SK-N-SH (cell line): ENCODE measurements at regions of chr13 and their contacts with region 1.

Region 1: DNA sequence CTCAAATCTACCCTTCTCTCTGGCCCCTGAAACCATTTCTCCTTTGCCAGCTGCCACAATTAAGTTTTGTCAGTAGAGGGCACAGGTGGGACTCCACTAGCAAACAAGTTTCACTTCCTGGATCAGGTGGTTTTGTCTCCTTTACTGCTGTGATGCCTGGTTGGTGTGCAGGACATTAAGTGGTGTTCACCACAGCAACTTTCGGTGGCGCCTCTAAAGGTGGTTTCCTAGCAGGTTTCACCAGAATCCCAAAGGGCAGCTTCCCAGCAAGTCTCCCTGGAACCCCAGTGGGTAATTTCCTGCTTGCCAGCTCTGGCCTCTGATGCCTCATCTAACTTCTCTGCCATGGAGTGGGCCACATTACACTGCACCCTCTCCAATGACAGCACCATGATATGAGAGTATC is 16.6 kb downstream of the MED4 start:
- DNase-seq: no peak
- H3K4me3 ChIP-seq: no peak overlapping the region
- H3K27ac ChIP-seq: no peak overlapping the region
- H3K4me1 ChIP-seq: no peaks in the 10 kb centered on the region
- H3K27me3 ChIP-seq: no peaks in the 10 kb centered on the region
- CTCF ChIP-seq: no peak; the same call in 1 of the 2 replicates
- EP300 ChIP-seq: no peak
- RAD21 ChIP-seq: no peak

Region 2: GRCh38 chr13:47875201-47875600 is 203.1 kb before region 1 on chr13:
- CTCF ChIA-PET with region 1: no interaction called
- POLR2A ChIA-PET with region 1: no interaction called
- DNase-seq: no peak
- H3K4me3 ChIP-seq: no peak overlapping the region
- H3K27ac ChIP-seq: no peak overlapping the region
- H3K4me1 ChIP-seq: no peaks in the 10 kb centered on the region
- H3K27me3 ChIP-seq: no peaks in the 10 kb centered on the region
- CTCF ChIP-seq: no peak
- EP300 ChIP-seq: no peak
- RAD21 ChIP-seq: no peak

Region 3: DNA sequence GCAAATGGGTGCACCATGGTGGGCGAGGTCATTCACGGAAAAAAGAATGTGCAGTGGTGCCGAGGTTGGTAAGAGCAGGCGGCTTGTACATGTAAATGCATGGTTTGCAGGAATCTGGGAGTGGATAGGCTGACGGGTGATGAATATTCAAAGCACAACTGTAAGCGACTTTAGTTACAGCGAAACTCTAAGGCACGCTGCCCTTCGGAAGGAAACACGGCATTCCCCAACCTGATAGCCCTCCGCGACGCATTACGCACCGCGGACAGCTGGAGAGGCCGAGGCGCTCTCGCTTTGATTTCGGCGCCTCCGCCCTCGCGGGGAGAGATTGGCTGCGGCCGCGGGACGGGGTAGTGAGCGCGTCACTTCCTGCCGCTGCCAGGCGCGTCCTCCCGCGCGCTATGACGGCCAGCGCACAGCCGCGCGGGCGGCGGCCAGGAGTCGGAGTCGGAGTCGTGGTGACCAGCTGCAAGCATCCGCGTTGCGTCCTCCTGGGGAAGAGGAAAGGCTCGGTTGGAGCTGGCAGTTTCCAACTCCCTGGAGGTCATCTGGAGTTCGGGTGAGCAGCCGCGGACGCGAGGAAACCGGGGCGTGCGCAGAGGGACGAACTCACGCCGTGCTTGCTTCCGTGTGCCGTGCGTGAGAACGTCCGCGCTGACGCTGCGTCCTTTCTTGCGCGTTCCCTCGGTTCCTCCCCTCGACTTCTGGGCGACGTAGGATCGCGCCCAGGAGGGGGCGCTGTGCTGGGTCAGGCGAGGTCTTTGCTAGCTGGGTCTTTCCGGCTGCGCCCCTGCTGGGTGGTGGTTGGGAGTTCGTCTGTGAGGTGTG is 40.7 kb before region 1 on chr13 and contains the start of gene NUDT15:
- CTCF ChIA-PET with region 1: interaction called, 11 read pairs
- POLR2A ChIA-PET with region 1: no interaction called
- DNase-seq: peak; percentile 93
- H3K4me3 ChIP-seq: peak within 1 kb of the TSS; percentile 71 to 86
- H3K27ac ChIP-seq: peak within 1 kb of the TSS; percentile 95 to 97
- H3K4me1 ChIP-seq: peaks cover 8 to 10% of the 10 kb centered on the region in 2 experiments; a peak in 3 of 4 replicates
- H3K27me3 ChIP-seq: no peaks in the 10 kb centered on the region
- CTCF ChIP-seq: peak; percentile 98
- EP300 ChIP-seq: peak; percentile 14 to 18; a peak in 1 of 4 replicates
- RAD21 ChIP-seq: peak; percentile 51
- polyA plus RNA-seq, gene NUDT15: 11.9 and 13.8 TPM in 2 replicates

Region 4: GRCh38 chr13:48094781-48095502 is 16.7 kb after region 1 on chr13 and contains the start of gene MED4:
- CTCF ChIA-PET with region 1: interaction called, 10 read pairs
- POLR2A ChIA-PET with region 1: no interaction called
- DNase-seq: peak; percentile 96
- H3K4me3 ChIP-seq: peak within 1 kb of the TSS; percentile 96 to 98
- H3K27ac ChIP-seq: peak within 1 kb of the TSS; percentile 59 to 70
- H3K4me1 ChIP-seq: peaks cover 5 to 13% of the 10 kb centered on the region in 2 experiments; a peak in 3 of 4 replicates
- H3K27me3 ChIP-seq: no peaks in the 10 kb centered on the region
- CTCF ChIP-seq: peak; percentile 99
- EP300 ChIP-seq: no peak; a peak in 1 of 4 replicates
- RAD21 ChIP-seq: peak; percentile 46
- polyA plus RNA-seq, gene MED4: 42.2 and 56.9 TPM in 2 replicates

Region 5: DNA sequence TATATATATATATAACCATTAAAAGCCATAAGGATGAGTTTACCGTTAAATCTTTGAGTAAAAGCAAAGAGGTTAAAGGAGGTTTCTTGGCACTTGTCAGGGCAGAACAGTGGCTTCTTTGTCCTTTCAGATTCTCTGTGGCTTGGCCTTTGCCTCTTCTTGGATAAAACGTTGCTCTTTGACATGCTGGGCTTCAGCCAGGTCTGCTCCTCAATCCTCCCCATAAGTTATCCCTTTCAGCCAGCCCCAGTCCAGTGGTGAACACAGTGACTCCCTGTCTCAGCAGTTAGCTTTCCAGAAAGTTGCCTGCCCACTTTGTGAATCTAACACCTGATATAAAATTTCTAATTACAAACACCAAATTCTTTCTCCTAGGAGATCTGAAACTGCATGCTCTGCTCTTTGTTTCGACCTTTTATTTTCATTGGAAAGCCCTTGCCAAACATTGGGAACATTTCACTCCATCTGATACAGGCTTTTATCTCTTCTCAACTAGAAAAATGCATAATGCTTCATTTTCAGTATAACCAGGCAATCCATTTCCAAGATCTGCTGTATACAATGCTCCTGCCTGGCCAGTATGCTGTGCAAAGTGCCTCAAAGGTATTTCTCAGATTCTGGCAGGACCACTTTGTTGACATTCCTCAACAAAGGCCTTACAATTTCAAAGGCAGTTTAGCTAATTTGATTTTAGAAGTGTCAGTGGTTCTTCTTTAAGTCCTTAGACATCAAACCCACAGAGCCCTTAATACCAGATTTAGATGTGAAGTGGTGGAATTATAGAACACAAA is 32.9 kb after region 1 on chr13:
- CTCF ChIA-PET with region 1: no interaction called
- POLR2A ChIA-PET with region 1: no interaction called
- DNase-seq: no peak
- H3K4me3 ChIP-seq: no peak overlapping the region
- H3K27ac ChIP-seq: peak overlapping the region in 1 of 2 experiments; percentile 86; a peak in 2 of 4 replicates
- H3K4me1 ChIP-seq: no peaks in the 10 kb centered on the region
- H3K27me3 ChIP-seq: no peaks in the 10 kb centered on the region
- CTCF ChIP-seq: no peak
- EP300 ChIP-seq: no peak
- RAD21 ChIP-seq: no peak

Region 6: GRCh38 chr13:48184260-48184659 is 106.0 kb after region 1 on chr13:
- CTCF ChIA-PET with region 1: no interaction called
- POLR2A ChIA-PET with region 1: no interaction called
- DNase-seq: no peak
- H3K4me3 ChIP-seq: no peak overlapping the region
- H3K27ac ChIP-seq: no peak overlapping the region
- H3K4me1 ChIP-seq: no peaks in the 10 kb centered on the region
- H3K27me3 ChIP-seq: no peaks in the 10 kb centered on the region
- CTCF ChIP-seq: no peak
- EP300 ChIP-seq: no peak
- RAD21 ChIP-seq: no peak